ENCODE measurements at regions of chr4 and their contacts with region 1.

Region 1: GRCh38 chr4:88765729-88766128 is 68.1 kb upstream of the NAP1L5 start:
- DNase-seq: peak; percentile 77 to 94
- ATAC-seq: peak; percentile 100
- H3K4me3 ChIP-seq: no peak overlapping the region
- H3K27ac ChIP-seq: peak overlapping the region; percentile 75 to 80 (median 75)
- H3K4me1 ChIP-seq: peaks cover 12 to 16% of the 10 kb centered on the region in 2 donors
- H3K27me3 ChIP-seq: no peaks in the 10 kb centered on the region
- CTCF ChIP-seq: no peak
- POLR2A ChIP-seq: no peak

Region 2: GRCh38 chr4:88737307-88737941 is 28.3 kb before region 1 on chr4:
- in situ Hi-C with region 1: no loop called
- intact Hi-C with region 1: loop called (anchors 1 kb)
- DNase-seq: peak; percentile 72 to 91
- ATAC-seq: peak; percentile 94 to 97
- H3K4me3 ChIP-seq: peak overlapping the region; percentile 37 to 52 (median 46)
- H3K27ac ChIP-seq: peak overlapping the region; percentile 79 to 90 (median 86)
- H3K4me1 ChIP-seq: peaks cover 39 to 40% of the 10 kb centered on the region in 2 donors
- H3K27me3 ChIP-seq: no peaks in the 10 kb centered on the region
- CTCF ChIP-seq: no peak
- POLR2A ChIP-seq: no peak

Region 3: DNA sequence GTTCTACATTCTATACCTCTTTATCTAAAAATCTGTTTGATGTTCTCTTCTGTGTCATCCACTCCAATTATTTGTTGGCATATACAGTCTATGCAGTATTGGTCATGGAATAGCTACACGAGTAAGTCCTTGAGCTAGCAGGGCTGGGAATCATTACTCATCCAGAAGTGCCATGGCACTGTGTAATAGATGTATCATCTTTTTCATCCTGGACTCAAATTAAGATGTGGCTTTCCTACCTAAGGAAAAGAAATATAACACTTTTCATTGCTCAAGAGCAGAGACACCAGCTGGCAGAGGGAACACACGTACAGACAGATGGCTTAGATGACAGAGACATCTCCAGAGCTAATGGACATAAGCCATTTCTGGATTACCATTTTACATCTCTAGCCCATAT is 131.5 kb after region 1 on chr4:
- in situ Hi-C with region 1: no loop called
- intact Hi-C with region 1: no loop called
- DNase-seq: peak; percentile 11 to 63
- ATAC-seq: peak; percentile 99 to 100
- H3K4me3 ChIP-seq: no peak overlapping the region
- H3K27ac ChIP-seq: peak overlapping the region in 3 of 4 donors; percentile 48 to 58 (median 57)
- H3K4me1 ChIP-seq: peaks cover 0 to 3% of the 10 kb centered on the region in 2 donors
- H3K27me3 ChIP-seq: no peaks in the 10 kb centered on the region
- CTCF ChIP-seq: no peak
- POLR2A ChIP-seq: no peak